ENCODE measurements at regions of chr12 and their contacts with region 1.

Region 1: GRCh38 chr12:93467351-93468007 is at the start of gene MRPL42:
- DNase-seq: peak; percentile 75 to 88
- H3K4me3 ChIP-seq: peak within 1 kb of the TSS; percentile 87
- H3K27ac ChIP-seq: peak within 1 kb of the TSS; percentile 88
- H3K4me1 ChIP-seq: peaks cover 20% of the 10 kb centered on the region; the same call in 1 of the 2 replicates
- H3K27me3 ChIP-seq: no peaks in the 10 kb centered on the region
- CTCF ChIP-seq: peak; percentile 78
- total RNA-seq, gene MRPL42: 52.8 and 61.0 TPM in 2 replicates

Region 2: GRCh38 chr12:93441617-93442410 is 25.7 kb before region 1 on chr12 and contains the start of gene UBE2N:
- CTCF ChIA-PET with region 1: interaction called, 9 read pairs
- POLR2A ChIA-PET with region 1: no interaction called
- intact Hi-C with region 1: loop called (anchors 1 kb)
- DNase-seq: peak; percentile 85 to 95
- H3K4me3 ChIP-seq: peak within 1 kb of the TSS; percentile 73
- H3K27ac ChIP-seq: peak within 1 kb of the TSS; percentile 83
- H3K4me1 ChIP-seq: peaks cover 31% of the 10 kb centered on the region
- H3K27me3 ChIP-seq: no peaks in the 10 kb centered on the region
- CTCF ChIP-seq: no peak
- total RNA-seq, gene UBE2N: 68.5 and 82.1 TPM in 2 replicates

Region 3: GRCh38 chr12:93663006-93663728 is 195.7 kb after region 1 on chr12:
- CTCF ChIA-PET with region 1: no interaction called
- POLR2A ChIA-PET with region 1: no interaction called
- intact Hi-C with region 1: no loop called
- DNase-seq: no peak
- H3K4me3 ChIP-seq: no peak overlapping the region
- H3K27ac ChIP-seq: no peak overlapping the region
- H3K4me1 ChIP-seq: no peaks in the 10 kb centered on the region
- H3K27me3 ChIP-seq: no peaks in the 10 kb centered on the region
- CTCF ChIP-seq: no peak

Region 4: DNA sequence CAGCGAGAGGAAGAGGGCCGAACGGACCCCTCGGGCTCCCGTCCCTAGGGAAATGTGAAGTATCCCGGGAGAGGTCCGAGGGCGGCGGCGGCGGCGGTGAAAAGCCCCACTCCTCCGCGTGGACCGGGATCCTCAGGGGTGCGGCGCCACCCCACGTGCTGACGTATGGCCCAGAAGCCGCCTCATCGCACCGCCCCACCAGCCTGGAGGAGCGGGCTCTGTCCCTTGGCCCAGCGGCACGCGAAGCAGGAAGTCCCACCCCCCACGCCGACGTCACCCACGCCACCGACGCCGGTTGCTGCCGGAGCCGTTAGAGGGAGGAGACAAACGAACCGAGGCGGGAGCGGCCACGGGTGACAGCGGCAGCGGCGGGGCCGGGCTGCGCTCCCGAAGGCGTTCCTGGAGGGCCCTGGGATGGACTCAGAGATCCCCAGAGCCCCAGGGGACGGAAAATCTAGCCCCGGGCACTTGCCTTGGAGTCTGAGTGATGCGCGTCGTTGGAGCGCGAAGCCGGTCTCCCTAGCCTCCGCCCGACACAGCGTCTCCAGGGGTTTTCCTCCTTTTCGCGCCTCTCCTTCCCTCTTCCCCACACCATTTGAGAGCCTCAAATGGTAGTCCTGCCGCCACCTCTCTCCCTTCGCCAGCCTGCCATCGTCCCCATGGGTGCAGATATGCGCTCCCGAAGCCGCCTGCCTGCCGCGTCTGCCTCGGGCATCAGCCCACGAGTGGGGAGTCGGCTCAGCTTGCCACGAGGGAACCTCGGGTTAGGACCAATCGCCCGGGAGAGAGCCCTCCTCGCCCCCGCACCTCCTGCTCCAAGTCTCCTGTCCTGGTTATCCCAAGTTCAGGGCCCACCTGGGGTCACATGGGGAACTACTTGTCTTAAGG is 992.5 kb after region 1 on chr12 and contains the start of gene CEP83:
- CTCF ChIA-PET with region 1: no interaction called
- POLR2A ChIA-PET with region 1: interaction called, 10 read pairs
- intact Hi-C with region 1: no loop called
- DNase-seq: peak; percentile 83 to 92
- H3K4me3 ChIP-seq: peak within 1 kb of the TSS; percentile 82
- H3K27ac ChIP-seq: peak within 1 kb of the TSS; percentile 57
- H3K4me1 ChIP-seq: peaks cover 30% of the 10 kb centered on the region
- H3K27me3 ChIP-seq: no peaks in the 10 kb centered on the region
- CTCF ChIP-seq: no peak
- total RNA-seq, gene CEP83: 19.6 and 25.4 TPM in 2 replicates

Measured in PC-9 (cell line).